PC-3 (cell line): ENCODE measurements at regions of chr3 and their contacts with region 1.

Region 1: GRCh38 chr3:95521395-95521794 is 1293.0 kb upstream of the EPHA6 start:
- DNase-seq: peak; percentile 12
- ATAC-seq: no peak
- H3K4me3 ChIP-seq: no peak overlapping the region
- H3K27ac ChIP-seq: no peak overlapping the region
- H3K4me1 ChIP-seq: no peaks in the 10 kb centered on the region
- H3K27me3 ChIP-seq: no peaks in the 10 kb centered on the region
- CTCF ChIP-seq: peak; percentile 41; the same call in 1 of the 2 replicates

Region 2: DNA sequence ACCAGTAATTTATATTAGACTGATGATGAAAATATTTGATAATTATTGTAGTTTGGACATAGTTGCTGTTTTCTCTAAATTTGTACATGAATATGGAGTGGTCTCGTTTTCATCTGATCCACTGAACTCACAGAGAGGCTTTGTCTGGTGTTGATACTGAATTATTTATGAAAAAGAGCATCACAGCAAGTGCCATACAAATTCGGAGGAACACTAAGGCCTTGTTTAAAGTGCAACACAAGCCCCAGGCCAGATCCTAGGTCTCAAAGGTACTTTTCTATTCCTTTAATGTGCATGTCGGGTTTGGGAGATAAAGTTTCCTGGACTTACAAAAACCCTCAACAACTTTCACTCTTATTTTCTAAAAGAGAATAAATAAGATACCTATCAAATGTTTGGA is 496.2 kb after region 1 on chr3:
- CTCF ChIA-PET with region 1: no interaction called
- POLR2A ChIA-PET with region 1: no interaction called
- intact Hi-C with region 1: loop called (anchors 5 kb)
- DNase-seq: no peak
- ATAC-seq: no peak
- H3K4me3 ChIP-seq: no peak overlapping the region
- H3K27ac ChIP-seq: no peak overlapping the region
- H3K4me1 ChIP-seq: no peaks in the 10 kb centered on the region
- H3K27me3 ChIP-seq: no peaks in the 10 kb centered on the region
- CTCF ChIP-seq: no peak

Region 3: DNA sequence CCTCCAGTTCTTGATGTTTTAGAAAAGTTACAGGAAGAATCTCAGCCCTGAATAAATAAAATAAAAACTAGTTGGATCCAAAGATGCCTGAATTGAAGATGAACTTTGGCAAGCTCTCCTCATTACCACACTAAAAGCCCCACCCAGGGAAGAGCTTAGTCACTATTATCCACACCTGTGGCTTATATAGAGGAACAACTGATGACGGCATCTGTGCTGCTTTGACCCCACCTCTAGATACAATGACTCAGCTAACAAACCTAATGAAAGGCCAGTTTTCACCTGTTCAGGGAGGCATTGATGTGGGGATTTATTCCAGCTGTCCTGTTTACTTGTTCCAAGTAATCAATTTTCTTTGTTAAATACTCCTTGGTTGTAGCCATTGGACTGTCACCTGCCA is 688.3 kb after region 1 on chr3:
- CTCF ChIA-PET with region 1: no interaction called
- POLR2A ChIA-PET with region 1: no interaction called
- intact Hi-C with region 1: loop called (anchors 10 kb)
- DNase-seq: peak; percentile 79
- ATAC-seq: peak; percentile 98
- H3K4me3 ChIP-seq: no peak overlapping the region
- H3K27ac ChIP-seq: peak overlapping the region; percentile 48; the same call in 1 of the 2 replicates
- H3K4me1 ChIP-seq: peaks cover 9% of the 10 kb centered on the region; the same call in 1 of the 2 replicates
- H3K27me3 ChIP-seq: no peaks in the 10 kb centered on the region
- CTCF ChIP-seq: no peak